PC-9 (cell line): ENCODE measurements at regions of chr20 and their contacts with region 1.

Region 1: GRCh38 chr20:23187751-23188150 is 101.6 kb upstream of the CD93 start:
- DNase-seq: peak in 1 of 2 experiments; percentile 38
- H3K4me3 ChIP-seq: no peak overlapping the region
- H3K27ac ChIP-seq: no peak overlapping the region
- H3K4me1 ChIP-seq: no peaks in the 10 kb centered on the region
- H3K27me3 ChIP-seq: no peaks in the 10 kb centered on the region
- CTCF ChIP-seq: no peak

Region 2: GRCh38 chr20:23086056-23086566 is 101.6 kb before region 1 on chr20 and contains the start of gene CD93:
- CTCF ChIA-PET with region 1: no interaction called
- POLR2A ChIA-PET with region 1: no interaction called
- intact Hi-C with region 1: no loop called
- DNase-seq: no peak
- H3K4me3 ChIP-seq: no peak within 1 kb of the TSS
- H3K27ac ChIP-seq: no peak within 1 kb of the TSS
- H3K4me1 ChIP-seq: no peaks in the 10 kb centered on the region
- H3K27me3 ChIP-seq: 0 out of 2 replicates have a peak, but pooled peaks cover 4% of the 10 kb centered on the region
- CTCF ChIP-seq: no peak
- total RNA-seq, gene CD93: 0.07 TPM in 1 of 2 replicates, not detected in the other

Region 3: DNA sequence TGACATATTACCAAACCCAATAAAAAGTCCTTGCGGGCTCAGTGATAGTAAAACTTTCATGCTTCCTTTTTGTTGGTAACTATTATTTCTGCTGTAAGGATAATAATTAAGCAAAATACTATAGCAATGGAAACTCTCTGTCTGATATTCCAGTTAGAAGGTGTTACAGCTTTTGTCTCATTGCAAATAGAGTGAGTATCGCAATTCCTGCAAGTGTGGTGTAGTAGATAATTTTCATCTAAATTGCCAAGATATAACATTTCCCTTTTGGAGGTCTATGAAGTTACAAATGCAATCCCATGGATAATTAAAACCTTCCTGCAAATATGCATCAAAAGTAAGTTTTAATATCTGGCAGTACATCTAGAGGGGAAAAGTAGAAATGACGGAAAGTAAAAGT is 12.9 kb before region 1 on chr20:
- CTCF ChIA-PET with region 1: no interaction called
- POLR2A ChIA-PET with region 1: no interaction called
- intact Hi-C with region 1: no loop called
- DNase-seq: no peak
- H3K4me3 ChIP-seq: no peak overlapping the region
- H3K27ac ChIP-seq: no peak overlapping the region
- H3K4me1 ChIP-seq: no peaks in the 10 kb centered on the region
- H3K27me3 ChIP-seq: no peaks in the 10 kb centered on the region
- CTCF ChIP-seq: no peak

Region 4: GRCh38 chr20:23257848-23258746 is 70.3 kb after region 1 on chr20:
- CTCF ChIA-PET with region 1: no interaction called
- POLR2A ChIA-PET with region 1: no interaction called
- intact Hi-C with region 1: no loop called
- DNase-seq: no peak
- H3K4me3 ChIP-seq: no peak overlapping the region
- H3K27ac ChIP-seq: no peak overlapping the region
- H3K4me1 ChIP-seq: peaks cover 7% of the 10 kb centered on the region
- H3K27me3 ChIP-seq: peaks cover 20% of the 10 kb centered on the region; the same call in 1 of the 2 replicates
- CTCF ChIP-seq: no peak

Region 5: GRCh38 chr20:23340524-23340923 is 152.8 kb after region 1 on chr20:
- CTCF ChIA-PET with region 1: interaction called, 14 read pairs
- POLR2A ChIA-PET with region 1: no interaction called
- intact Hi-C with region 1: no loop called
- DNase-seq: peak; percentile 59 to 61
- H3K4me3 ChIP-seq: no peak overlapping the region
- H3K27ac ChIP-seq: no peak overlapping the region
- H3K4me1 ChIP-seq: no peaks in the 10 kb centered on the region
- H3K27me3 ChIP-seq: no peaks in the 10 kb centered on the region
- CTCF ChIP-seq: peak; percentile 85